OCI-LY7 (cell line): ENCODE measurements at regions of chr11 and their contacts with region 1.

Region 1: DNA sequence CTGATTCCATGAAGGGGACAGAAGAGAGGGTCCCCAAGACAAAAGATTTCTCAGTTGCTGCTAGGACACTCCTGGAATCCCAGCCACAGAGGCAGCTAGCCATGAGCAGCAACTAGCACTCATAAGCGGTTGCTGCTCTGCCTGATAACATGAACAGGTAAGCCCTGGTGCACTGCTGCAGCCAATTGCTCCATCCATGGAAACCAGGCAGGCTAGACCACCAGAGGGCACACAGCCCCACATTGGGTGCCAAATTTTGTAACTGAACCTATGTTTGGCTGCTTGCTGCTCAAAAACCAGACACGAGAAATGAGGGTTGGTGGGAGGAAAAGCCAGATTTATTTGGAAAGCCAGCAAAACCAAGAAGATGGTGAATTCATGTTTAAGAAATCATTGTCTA is 21.9 kb upstream of the QSER1 start:
- DNase-seq: peak; percentile 48
- H3K4me3 ChIP-seq: no peak overlapping the region
- H3K27ac ChIP-seq: no peak overlapping the region
- H3K4me1 ChIP-seq: no peaks in the 10 kb centered on the region
- CTCF ChIP-seq: peak; percentile 68

Region 2: GRCh38 chr11:32829680-32830412 is 40.8 kb before region 1 on chr11 and contains the start of gene PRRG4:
- CTCF ChIA-PET with region 1: no interaction called
- POLR2A ChIA-PET with region 1: no interaction called
- intact Hi-C with region 1: loop called (anchors 5 kb)
- DNase-seq: peak; percentile 4
- H3K4me3 ChIP-seq: peak within 1 kb of the TSS; percentile 56
- H3K27ac ChIP-seq: no peak within 1 kb of the TSS
- H3K4me1 ChIP-seq: no peaks in the 10 kb centered on the region
- CTCF ChIP-seq: no peak
- total RNA-seq, gene PRRG4: not detected in 2 replicates